HEK293 (cell line): ENCODE measurements at regions of chr6 and their contacts with region 1.

Region 1: GRCh38 chr6:22025468-22026160 is 271.2 kb downstream of the PRL start:
- H3K4me3 ChIP-seq: no peak overlapping the region; the same call in 1 of the 2 replicates
- H3K27ac ChIP-seq: no peak overlapping the region; the same call in 1 of the 2 replicates
- H3K4me1 ChIP-seq: peaks cover 2% of the 10 kb centered on the region; the same call in 1 of the 2 replicates
- CTCF ChIP-seq: no peak

Region 2: DNA sequence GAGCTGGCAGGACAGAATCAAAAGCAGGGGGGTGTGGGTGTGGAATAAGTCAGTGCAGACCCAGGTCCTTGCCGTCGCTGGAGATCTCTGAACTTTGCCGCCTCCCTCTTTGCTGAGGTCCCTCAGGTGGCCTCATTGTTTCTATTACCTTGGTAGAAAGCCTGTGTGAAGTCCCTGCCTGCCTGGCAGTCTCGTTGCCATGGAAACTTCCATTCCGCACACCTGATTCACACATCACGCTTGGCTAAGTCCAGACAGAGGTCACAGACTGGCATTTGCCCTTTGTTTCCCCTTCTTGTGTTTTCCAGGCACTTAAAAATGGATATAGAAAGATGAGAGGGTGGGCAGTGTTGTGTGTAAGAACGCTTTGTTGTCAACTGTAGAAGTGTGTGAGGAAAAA is 10.7 kb after region 1 on chr6:
- CTCF ChIA-PET with region 1: interaction called, 3 read pairs
- POLR2A ChIA-PET with region 1: interaction called, 10 read pairs
- H3K4me3 ChIP-seq: no peak overlapping the region
- H3K27ac ChIP-seq: no peak overlapping the region
- H3K4me1 ChIP-seq: 0 out of 2 replicates have a peak, but pooled peaks cover 4% of the 10 kb centered on the region
- CTCF ChIP-seq: no peak